ENCODE measurements at regions of chr1 and their contacts with region 1.

Region 1: GRCh38 chr1:35451125-35451528 is 106.1 kb downstream of the KIAA0319L start:
- DNase-seq: peak; percentile 41 to 86 (median 72)
- ATAC-seq: peak; percentile 87 to 91 (median 91)
- H3K4me3 ChIP-seq: no peak overlapping the region
- H3K4me3 Mint-ChIP-seq: peak overlapping the region in 1 of 3 donors; percentile 21
- H3K27ac ChIP-seq: peak overlapping the region; percentile 39
- H3K27ac Mint-ChIP-seq: peak overlapping the region; percentile 91 to 94
- H3K4me1 ChIP-seq: peaks cover 14 to 21% of the 10 kb centered on the region in 2 experiments
- H3K4me1 Mint-ChIP-seq: peaks cover 30 to 39% (median 33%) of the 10 kb centered on the region in 3 donors
- H3K27me3 ChIP-seq: no peaks in the 10 kb centered on the region
- H3K27me3 Mint-ChIP-seq: no peaks in the 10 kb centered on the region

Region 2: GRCh38 chr1:35505908-35506798 is 55.0 kb after region 1 on chr1:
- CTCF ChIA-PET with region 1: interaction called in 1 of 2 experiments, 16 read pairs
- POLR2A ChIA-PET with region 1: no interaction called
- DNase-seq: peak; percentile 12 to 72 (median 43)
- ATAC-seq: peak; percentile 79 to 87 (median 82)
- H3K4me3 ChIP-seq: peak overlapping the region; percentile 16 to 32
- H3K4me3 Mint-ChIP-seq: peak overlapping the region; percentile 46 to 76 (median 66)
- H3K27ac ChIP-seq: peak overlapping the region; percentile 87
- H3K27ac Mint-ChIP-seq: peak overlapping the region; percentile 92 to 99
- H3K4me1 ChIP-seq: peaks cover 36 to 38% of the 10 kb centered on the region in 2 experiments
- H3K4me1 Mint-ChIP-seq: peaks cover 73 to 80% (median 79%) of the 10 kb centered on the region in 3 donors
- H3K27me3 ChIP-seq: no peaks in the 10 kb centered on the region
- H3K27me3 Mint-ChIP-seq: no peaks in the 10 kb centered on the region

Region 3: DNA sequence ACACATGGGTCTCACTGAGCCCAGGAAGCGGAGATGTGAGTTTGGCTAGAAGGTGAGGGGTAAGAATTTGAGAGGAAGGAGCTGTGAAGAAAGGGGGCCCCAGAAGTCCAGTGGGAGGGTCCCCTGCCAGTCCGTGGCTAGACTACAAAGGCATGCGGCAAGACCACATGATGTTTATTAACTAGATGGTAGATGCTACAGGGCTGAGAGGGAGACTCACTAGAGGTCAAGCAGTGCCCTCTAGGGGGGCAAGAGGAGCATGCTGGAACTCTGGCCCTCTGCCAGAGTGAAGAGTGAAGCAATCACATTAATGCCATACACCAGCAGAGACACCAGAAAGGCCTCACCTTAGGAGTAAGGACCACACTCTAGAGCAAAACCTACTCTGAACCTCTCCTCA is 93.9 kb after region 1 on chr1:
- CTCF ChIA-PET with region 1: interaction called, 8 to 21 read pairs
- POLR2A ChIA-PET with region 1: interaction called, 3 to 4 read pairs
- DNase-seq: peak in 29 of 35 experiments; percentile 32 to 80 (median 50)
- ATAC-seq: peak; percentile 61 to 87 (median 80)
- H3K4me3 ChIP-seq: no peak overlapping the region
- H3K4me3 Mint-ChIP-seq: no peak overlapping the region
- H3K27ac ChIP-seq: no peak overlapping the region
- H3K27ac Mint-ChIP-seq: peak overlapping the region; percentile 40 to 71
- H3K4me1 ChIP-seq: peaks cover 33 to 36% of the 10 kb centered on the region in 2 experiments
- H3K4me1 Mint-ChIP-seq: peaks cover 73 to 77% (median 76%) of the 10 kb centered on the region in 3 donors
- H3K27me3 ChIP-seq: no peaks in the 10 kb centered on the region
- H3K27me3 Mint-ChIP-seq: no peaks in the 10 kb centered on the region

Region 4: DNA sequence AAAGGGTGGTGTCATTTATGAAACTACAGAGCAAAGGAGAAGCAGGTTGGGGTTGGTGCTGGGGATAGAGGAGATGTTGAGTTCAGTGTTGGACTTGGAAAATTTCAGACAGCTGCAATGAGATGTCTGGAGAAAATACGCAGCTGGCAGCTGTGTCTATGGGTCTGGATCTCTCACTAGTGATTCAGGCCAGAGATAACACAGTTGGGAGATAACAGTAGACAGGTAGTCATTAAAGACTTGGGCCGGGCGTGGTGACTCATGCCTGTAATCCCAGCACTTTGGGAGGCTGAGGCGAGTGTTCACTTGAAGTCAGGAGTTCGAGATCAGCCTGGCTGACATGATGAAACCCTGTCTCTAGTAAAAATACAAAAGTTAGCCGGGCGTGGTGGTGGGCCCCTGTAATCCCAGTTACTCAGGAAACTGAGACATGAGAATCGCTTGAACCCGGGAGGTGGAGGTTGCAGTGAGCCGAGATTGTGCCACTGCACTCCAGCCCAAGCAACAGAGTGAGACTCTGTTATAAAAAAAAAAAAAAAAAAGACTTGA is 119.5 kb after region 1 on chr1:
- CTCF ChIA-PET with region 1: interaction called, 14 to 56 read pairs
- POLR2A ChIA-PET with region 1: no interaction called
- DNase-seq: no peak
- ATAC-seq: no peak
- H3K4me3 ChIP-seq: no peak overlapping the region
- H3K4me3 Mint-ChIP-seq: no peak overlapping the region
- H3K27ac ChIP-seq: no peak overlapping the region
- H3K27ac Mint-ChIP-seq: no peak overlapping the region
- H3K4me1 ChIP-seq: peaks cover 0 to 13% of the 10 kb centered on the region in 2 experiments
- H3K4me1 Mint-ChIP-seq: peaks cover 10 to 18% (median 14%) of the 10 kb centered on the region in 3 donors
- H3K27me3 ChIP-seq: peaks cover 0 to 6% of the 10 kb centered on the region in 2 experiments
- H3K27me3 Mint-ChIP-seq: no peaks in the 10 kb centered on the region

Region 5: DNA sequence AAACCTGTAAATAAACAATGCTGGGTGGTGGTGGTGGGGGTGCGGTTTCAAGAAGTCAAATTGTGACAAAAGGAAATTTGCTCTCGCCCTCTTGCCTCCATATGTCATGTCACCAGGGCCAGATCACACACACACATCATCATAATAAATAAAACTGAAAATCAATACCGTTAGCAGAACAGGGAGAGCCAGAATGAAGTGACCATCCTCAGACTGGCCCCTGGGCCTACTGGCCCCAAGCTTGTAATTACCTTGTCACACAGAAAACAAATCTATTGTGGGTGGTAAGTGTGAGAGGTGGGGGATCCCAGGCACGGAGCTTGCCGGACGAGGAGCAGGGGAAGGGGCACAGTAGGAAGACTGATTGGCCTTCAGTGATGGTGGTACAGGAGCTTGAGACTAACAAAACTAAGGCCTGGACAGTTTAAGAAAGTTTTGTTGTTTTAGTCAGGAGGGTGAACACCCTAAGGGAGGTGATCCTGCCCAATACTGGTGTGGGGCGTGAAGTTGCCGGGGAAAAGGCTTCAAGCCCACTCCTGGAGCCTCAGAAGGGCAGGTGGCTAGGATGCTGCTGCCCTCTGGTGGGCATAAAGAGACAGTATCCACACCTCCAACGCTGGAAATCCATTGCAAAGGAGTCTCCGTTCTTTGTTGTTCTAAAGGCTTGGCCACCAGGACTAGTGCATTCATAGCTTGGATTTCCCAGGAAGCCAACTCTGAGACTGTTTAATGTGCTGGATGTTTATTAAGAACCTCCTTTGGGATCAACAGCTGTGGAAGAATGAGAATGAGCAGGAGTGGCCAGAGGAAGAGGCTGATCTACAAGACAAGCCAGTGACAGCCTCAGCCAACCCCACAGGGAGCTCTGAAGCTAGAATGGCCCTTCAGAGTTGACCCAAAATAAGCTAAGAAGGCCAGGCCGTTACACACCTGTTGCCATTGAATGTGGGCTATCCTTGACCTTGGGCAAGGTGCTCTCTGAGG is 275.6 kb after region 1 on chr1:
- CTCF ChIA-PET with region 1: interaction called, 5 to 18 read pairs
- POLR2A ChIA-PET with region 1: no interaction called
- DNase-seq: peak in 30 of 35 experiments; percentile 12 to 81 (median 36)
- ATAC-seq: peak; percentile 85 to 90 (median 88)
- H3K4me3 ChIP-seq: no peak overlapping the region
- H3K4me3 Mint-ChIP-seq: no peak overlapping the region
- H3K27ac ChIP-seq: no peak overlapping the region
- H3K27ac Mint-ChIP-seq: no peak overlapping the region
- H3K4me1 ChIP-seq: peaks cover 0 to 7% of the 10 kb centered on the region in 2 experiments
- H3K4me1 Mint-ChIP-seq: peaks cover 4 to 7% (median 4%) of the 10 kb centered on the region in 3 donors
- H3K27me3 ChIP-seq: no peaks in the 10 kb centered on the region
- H3K27me3 Mint-ChIP-seq: no peaks in the 10 kb centered on the region